T-cell (primary cell): ENCODE measurements at regions of chr5 and their contacts with region 1.

Region 1: DNA sequence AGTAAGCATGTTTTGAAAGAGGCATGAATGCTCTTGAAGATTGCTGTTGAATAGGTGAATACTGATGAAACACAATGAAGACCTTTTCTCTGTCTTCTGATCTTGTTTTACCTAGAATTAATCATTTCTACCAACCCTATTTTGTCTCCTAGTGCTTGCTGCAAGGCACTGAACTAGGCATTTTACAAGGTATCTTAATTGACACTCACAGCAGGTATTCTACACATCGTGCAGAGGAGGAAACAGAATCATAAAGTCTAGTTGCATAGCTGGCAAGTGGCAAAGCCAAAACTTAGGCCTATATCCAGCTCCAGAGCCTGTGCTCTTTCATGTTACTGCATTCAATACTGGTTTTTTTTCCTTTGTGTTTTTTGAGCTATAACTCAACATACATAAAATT is 50.7 kb downstream of the CTNNA1 start:
- DNase-seq: no peak
- ATAC-seq: no peak
- H3K4me3 ChIP-seq: no peak overlapping the region
- H3K4me3 Mint-ChIP-seq: no peak overlapping the region
- H3K27ac ChIP-seq: no peak overlapping the region
- H3K27ac Mint-ChIP-seq: no peak overlapping the region
- H3K4me1 ChIP-seq: peaks cover 0 to 3% of the 10 kb centered on the region in 2 experiments
- H3K4me1 Mint-ChIP-seq: peaks cover 6 to 15% (median 15%) of the 10 kb centered on the region in 3 donors
- H3K27me3 ChIP-seq: no peaks in the 10 kb centered on the region
- H3K27me3 Mint-ChIP-seq: peaks cover 11 to 31% of the 10 kb centered on the region in 2 donors

Region 2: GRCh38 chr5:137155261-137156000 is 1648.5 kb before region 1 on chr5:
- CTCF ChIA-PET with region 1: no interaction called
- POLR2A ChIA-PET with region 1: no interaction called
- DNase-seq: no peak
- ATAC-seq: no peak
- H3K4me3 ChIP-seq: no peak overlapping the region
- H3K4me3 Mint-ChIP-seq: no peak overlapping the region
- H3K27ac ChIP-seq: no peak overlapping the region
- H3K27ac Mint-ChIP-seq: no peak overlapping the region
- H3K4me1 ChIP-seq: no peaks in the 10 kb centered on the region
- H3K4me1 Mint-ChIP-seq: no peaks in the 10 kb centered on the region
- H3K27me3 ChIP-seq: no peaks in the 10 kb centered on the region
- H3K27me3 Mint-ChIP-seq: peaks cover 0 to 3% of the 10 kb centered on the region in 2 donors

Region 3: DNA sequence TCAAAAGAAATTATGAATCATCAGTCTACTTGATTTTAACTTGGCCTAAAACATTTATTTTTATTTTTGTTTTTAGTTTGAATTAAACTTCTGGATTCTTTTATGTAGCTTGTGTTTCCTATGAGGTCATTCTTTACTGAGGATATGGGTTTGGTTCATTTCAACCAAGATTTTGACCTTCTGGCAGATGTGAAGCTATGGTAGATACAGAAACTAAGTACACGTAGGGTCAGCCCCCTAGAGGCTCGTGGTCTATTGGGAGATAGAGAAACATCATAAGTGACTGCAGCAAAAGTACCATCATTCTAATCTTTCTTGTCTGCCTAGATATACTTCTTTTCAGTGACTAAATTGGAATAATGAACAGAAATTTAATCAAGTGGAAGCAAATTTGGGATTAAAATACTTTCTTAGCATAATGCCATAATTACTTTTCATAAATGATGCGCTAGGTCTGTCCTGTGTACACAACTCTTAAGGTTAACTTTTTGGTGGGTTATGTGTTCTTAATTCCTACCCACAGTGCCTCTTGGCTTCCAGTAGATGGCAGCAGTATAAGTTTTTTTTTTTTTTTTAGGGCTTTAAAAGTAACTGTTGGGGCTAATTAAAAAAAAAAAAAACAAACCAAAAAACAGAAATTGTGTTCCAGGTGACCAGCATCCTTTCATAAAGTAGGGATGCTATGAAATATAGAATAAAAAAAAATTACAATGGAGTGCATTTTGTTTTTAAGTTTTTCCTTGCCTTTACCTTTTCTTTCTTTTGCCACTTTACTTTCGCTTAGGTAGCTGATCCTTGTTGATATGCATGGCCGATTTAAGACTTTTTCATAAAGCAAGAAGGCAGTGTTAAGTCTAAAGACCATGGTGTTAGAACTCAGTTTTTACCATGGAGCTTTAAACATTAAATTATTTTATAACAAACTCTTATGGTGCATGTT is 21.3 kb after region 1 on chr5:
- CTCF ChIA-PET with region 1: no interaction called
- POLR2A ChIA-PET with region 1: interaction called in 1 of 2 experiments, 14 read pairs
- DNase-seq: peak in 1 of 35 experiments; percentile 31
- ATAC-seq: no peak
- H3K4me3 ChIP-seq: no peak overlapping the region
- H3K4me3 Mint-ChIP-seq: no peak overlapping the region
- H3K27ac ChIP-seq: no peak overlapping the region
- H3K27ac Mint-ChIP-seq: no peak overlapping the region
- H3K4me1 ChIP-seq: no peaks in the 10 kb centered on the region
- H3K4me1 Mint-ChIP-seq: no peaks in the 10 kb centered on the region
- H3K27me3 ChIP-seq: no peaks in the 10 kb centered on the region
- H3K27me3 Mint-ChIP-seq: peaks cover 2 to 8% of the 10 kb centered on the region in 2 donors